CD4-positive, alpha-beta memory T cell (primary cell): ENCODE measurements at regions of chr4 and their contacts with region 1.

Region 1: DNA sequence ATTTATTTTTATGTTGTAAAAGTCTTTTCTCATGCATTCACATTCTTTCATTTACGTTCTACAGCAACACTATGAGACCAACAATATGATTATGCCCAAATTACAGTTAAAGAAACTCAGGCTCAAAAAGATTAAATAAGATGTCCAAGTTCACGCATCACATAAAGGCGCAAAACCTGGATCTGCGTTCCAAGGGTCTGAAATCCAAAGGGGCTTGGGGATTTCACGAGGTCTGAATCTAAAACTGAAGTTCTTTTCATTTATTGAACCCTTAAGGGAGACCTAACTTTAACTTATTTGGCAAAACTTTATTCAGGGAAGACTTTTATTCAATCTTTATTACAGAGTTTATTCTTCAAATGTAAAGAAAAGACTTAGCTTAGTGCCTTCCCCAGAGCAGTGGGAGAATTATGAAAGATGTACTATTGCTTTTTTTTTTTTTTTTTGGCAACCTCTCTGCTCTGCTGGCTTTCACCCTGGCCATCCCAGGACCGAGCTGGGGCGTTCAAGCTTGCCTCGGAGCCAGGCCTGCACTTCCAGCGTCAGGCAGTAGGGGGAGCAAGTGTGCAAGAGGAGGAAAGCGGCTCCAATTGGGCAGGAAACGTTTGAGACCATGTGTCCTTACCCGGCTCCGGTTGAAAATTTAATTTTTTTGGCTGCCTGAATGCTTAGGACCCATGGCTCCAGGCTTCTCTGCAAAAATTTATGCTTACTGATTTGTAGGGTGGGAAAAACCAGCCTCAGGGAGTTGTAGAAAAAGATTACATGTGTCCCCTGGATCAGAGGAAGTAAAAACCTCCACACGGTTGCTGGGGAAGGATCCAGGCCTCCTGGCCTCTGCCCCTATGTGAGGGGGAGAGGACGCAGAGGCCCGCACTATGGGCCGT is 344.3 kb upstream of the KLF3 start:
- DNase-seq: peak; percentile 77 to 85 (median 80)
- H3K4me3 ChIP-seq: peak overlapping the region in 1 of 2 donors; percentile 42
- H3K4me3 Mint-ChIP-seq: peak overlapping the region; percentile 80 to 96 (median 89)
- H3K27ac ChIP-seq: peak overlapping the region; percentile 65
- H3K27ac Mint-ChIP-seq: peak overlapping the region; percentile 88 to 98 (median 95)
- H3K4me1 ChIP-seq: peaks cover 30% of the 10 kb centered on the region
- H3K4me1 Mint-ChIP-seq: peaks cover 26 to 54% (median 41%) of the 10 kb centered on the region in 4 donors
- H3K27me3 ChIP-seq: no peaks in the 10 kb centered on the region
- H3K27me3 Mint-ChIP-seq: no peaks in the 10 kb centered on the region

Region 2: GRCh38 chr4:37165844-37166243 is 1153.9 kb before region 1 on chr4:
- CTCF ChIA-PET with region 1: no interaction called
- POLR2A ChIA-PET with region 1: no interaction called
- intact Hi-C with region 1: no loop called
- DNase-seq: no peak
- H3K4me3 ChIP-seq: no peak overlapping the region
- H3K4me3 Mint-ChIP-seq: no peak overlapping the region
- H3K27ac ChIP-seq: no peak overlapping the region
- H3K27ac Mint-ChIP-seq: no peak overlapping the region
- H3K4me1 ChIP-seq: no peaks in the 10 kb centered on the region
- H3K4me1 Mint-ChIP-seq: no peaks in the 10 kb centered on the region
- H3K27me3 ChIP-seq: no peaks in the 10 kb centered on the region
- H3K27me3 Mint-ChIP-seq: peaks cover 0 to 2% of the 10 kb centered on the region in 2 donors

Region 3: DNA sequence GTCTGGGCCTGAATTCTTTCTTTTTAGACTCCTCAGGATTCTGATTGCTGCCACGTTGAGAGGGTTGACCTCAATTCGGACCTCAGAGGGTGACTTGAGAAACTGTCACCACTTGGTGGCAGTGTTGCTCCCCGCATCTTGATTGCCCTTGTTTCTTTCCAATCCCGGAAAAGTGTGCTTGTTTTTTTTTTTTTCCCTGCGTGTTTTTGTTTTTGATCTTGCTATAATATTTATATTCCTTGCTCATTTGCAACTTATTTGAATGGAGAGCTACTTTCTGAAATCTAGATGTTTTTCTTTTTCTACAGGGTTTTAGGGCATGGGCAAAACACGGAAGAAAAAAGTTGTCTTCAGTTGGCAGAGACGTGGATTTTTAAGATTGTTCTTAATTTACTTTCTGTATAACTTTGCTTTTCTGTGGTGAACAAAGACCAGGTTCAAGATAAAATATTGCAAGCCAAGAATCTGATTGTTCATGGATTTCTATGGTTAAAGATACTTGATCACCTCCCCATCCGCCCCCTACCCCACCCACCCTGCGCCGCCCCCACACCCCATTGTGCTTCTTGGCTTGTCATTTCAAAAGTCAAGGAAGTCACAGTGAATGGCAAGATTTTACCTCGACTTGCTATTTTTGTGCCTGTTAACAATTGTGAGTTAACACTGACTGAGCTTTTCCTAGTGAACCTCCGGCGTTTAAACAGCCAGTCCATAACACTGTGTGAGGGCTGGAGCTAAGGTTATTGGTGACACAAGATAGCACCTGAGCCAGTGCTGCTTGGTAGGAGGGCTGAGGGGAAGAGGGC is 257.4 kb before region 1 on chr4:
- CTCF ChIA-PET with region 1: interaction called, 5 read pairs
- POLR2A ChIA-PET with region 1: no interaction called
- intact Hi-C with region 1: loop called (anchors 2 kb)
- DNase-seq: peak; percentile 38 to 51 (median 49)
- H3K4me3 ChIP-seq: peak overlapping the region in 1 of 2 donors; percentile 42
- H3K4me3 Mint-ChIP-seq: peak overlapping the region; percentile 73 to 94 (median 87)
- H3K27ac ChIP-seq: no peak overlapping the region
- H3K27ac Mint-ChIP-seq: peak overlapping the region; percentile 20 to 91 (median 72)
- H3K4me1 ChIP-seq: peaks cover 4% of the 10 kb centered on the region
- H3K4me1 Mint-ChIP-seq: peaks cover 7 to 16% (median 8%) of the 10 kb centered on the region in 4 donors
- H3K27me3 ChIP-seq: no peaks in the 10 kb centered on the region
- H3K27me3 Mint-ChIP-seq: no peaks in the 10 kb centered on the region

Region 4: GRCh38 chr4:38343608-38344007 is 23.9 kb after region 1 on chr4:
- CTCF ChIA-PET with region 1: no interaction called
- POLR2A ChIA-PET with region 1: no interaction called
- intact Hi-C with region 1: no loop called
- DNase-seq: no peak
- H3K4me3 ChIP-seq: no peak overlapping the region
- H3K4me3 Mint-ChIP-seq: no peak overlapping the region
- H3K27ac ChIP-seq: no peak overlapping the region
- H3K27ac Mint-ChIP-seq: no peak overlapping the region
- H3K4me1 ChIP-seq: no peaks in the 10 kb centered on the region
- H3K4me1 Mint-ChIP-seq: peaks cover 0 to 4% (median under 1%) of the 10 kb centered on the region in 4 donors
- H3K27me3 ChIP-seq: no peaks in the 10 kb centered on the region
- H3K27me3 Mint-ChIP-seq: peaks cover 0 to 2% of the 10 kb centered on the region in 2 donors

Region 5: GRCh38 chr4:38601244-38601897 is 281.7 kb after region 1 on chr4:
- CTCF ChIA-PET with region 1: interaction called, 9 read pairs
- POLR2A ChIA-PET with region 1: no interaction called
- intact Hi-C with region 1: loop called (anchors 1 kb)
- DNase-seq: no peak
- H3K4me3 ChIP-seq: no peak overlapping the region
- H3K4me3 Mint-ChIP-seq: no peak overlapping the region
- H3K27ac ChIP-seq: no peak overlapping the region
- H3K27ac Mint-ChIP-seq: peak overlapping the region in 2 of 7 donors; percentile 42 to 43
- H3K4me1 ChIP-seq: peaks cover 15% of the 10 kb centered on the region
- H3K4me1 Mint-ChIP-seq: peaks cover 20 to 26% (median 24%) of the 10 kb centered on the region in 4 donors
- H3K27me3 ChIP-seq: no peaks in the 10 kb centered on the region
- H3K27me3 Mint-ChIP-seq: no peaks in the 10 kb centered on the region

Region 6: GRCh38 chr4:38663801-38664705 is 344.4 kb after region 1 on chr4 and contains the start of gene KLF3:
- CTCF ChIA-PET with region 1: interaction called, 37 read pairs
- POLR2A ChIA-PET with region 1: interaction called, 70 read pairs
- intact Hi-C with region 1: loop called (anchors 2 kb)
- DNase-seq: peak; percentile 93 to 96 (median 94)
- H3K4me3 ChIP-seq: peak within 1 kb of the TSS; percentile 83 to 92
- H3K4me3 Mint-ChIP-seq: peak within 1 kb of the TSS; percentile 89 to 100 (median 98)
- H3K27ac ChIP-seq: peak within 1 kb of the TSS; percentile 92
- H3K27ac Mint-ChIP-seq: peak within 1 kb of the TSS; percentile 91 to 100 (median 99)
- H3K4me1 ChIP-seq: peaks cover 46% of the 10 kb centered on the region
- H3K4me1 Mint-ChIP-seq: peaks cover 40 to 80% (median 56%) of the 10 kb centered on the region in 4 donors
- H3K27me3 ChIP-seq: no peaks in the 10 kb centered on the region
- H3K27me3 Mint-ChIP-seq: no peaks in the 10 kb centered on the region
- total RNA-seq, gene KLF3: 119 to 122 TPM

Region 7: GRCh38 chr4:38804654-38805295 is 485.1 kb after region 1 on chr4 and contains the start of gene TLR1:
- CTCF ChIA-PET with region 1: no interaction called
- POLR2A ChIA-PET with region 1: interaction called, 3 read pairs
- intact Hi-C with region 1: loop called (anchors 2 kb)
- DNase-seq: peak in 4 of 5 donors; percentile 65 to 71 (median 65)
- H3K4me3 ChIP-seq: peak within 1 kb of the TSS; percentile 54 to 57
- H3K4me3 Mint-ChIP-seq: peak within 1 kb of the TSS; percentile 90 to 96 (median 92)
- H3K27ac ChIP-seq: peak within 1 kb of the TSS; percentile 47
- H3K27ac Mint-ChIP-seq: peak within 1 kb of the TSS; percentile 84 to 99 (median 94)
- H3K4me1 ChIP-seq: peaks cover 25% of the 10 kb centered on the region
- H3K4me1 Mint-ChIP-seq: peaks cover 24 to 45% (median 35%) of the 10 kb centered on the region in 4 donors
- H3K27me3 ChIP-seq: no peaks in the 10 kb centered on the region
- H3K27me3 Mint-ChIP-seq: no peaks in the 10 kb centered on the region
- total RNA-seq, gene TLR1: 20.6 to 24.3 TPM